ENCODE measurements at regions of chr2 and their contacts with region 1.

Region 1: GRCh38 chr2:64330281-64331113 is 123.5 kb upstream of the LGALSL start:
- DNase-seq: peak; percentile 54
- H3K4me3 Mint-ChIP-seq: no peak overlapping the region
- H3K27ac Mint-ChIP-seq: peak overlapping the region; percentile 64
- H3K4me1 Mint-ChIP-seq: peaks cover 49% of the 10 kb centered on the region
- H3K27me3 Mint-ChIP-seq: peaks cover 7% of the 10 kb centered on the region

Region 2: GRCh38 chr2:63977904-63978303 is 352.6 kb before region 1 on chr2:
- intact Hi-C with region 1: loop called (anchors 5 kb)
- DNase-seq: peak; percentile 38
- H3K4me3 Mint-ChIP-seq: peak overlapping the region; percentile 57
- H3K27ac Mint-ChIP-seq: peak overlapping the region; percentile 69
- H3K4me1 Mint-ChIP-seq: peaks cover 26% of the 10 kb centered on the region
- H3K27me3 Mint-ChIP-seq: no peaks in the 10 kb centered on the region

Region 3: DNA sequence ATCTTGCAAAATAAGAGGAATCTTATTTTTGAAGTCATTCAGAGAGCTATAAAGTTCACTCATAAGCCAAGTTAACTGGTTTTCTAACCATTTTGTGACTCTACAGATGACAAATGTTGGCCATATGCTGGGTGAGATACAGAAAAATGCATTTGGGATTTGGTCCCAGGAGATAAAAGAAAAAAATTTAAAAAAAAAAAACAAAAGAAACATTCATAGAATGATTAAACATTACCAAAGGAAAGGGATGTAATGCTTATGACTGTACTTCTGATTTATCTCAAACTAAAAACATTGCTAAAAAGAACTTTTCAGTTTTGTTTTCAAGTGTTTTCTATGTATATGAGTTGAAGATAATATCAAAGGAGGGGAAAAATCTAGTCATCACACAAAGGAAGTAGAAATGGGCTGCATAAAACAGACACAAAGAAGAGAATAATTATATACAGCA is 229.3 kb before region 1 on chr2:
- intact Hi-C with region 1: loop called (anchors 1 kb)
- DNase-seq: no peak
- H3K4me3 Mint-ChIP-seq: peak overlapping the region; percentile 27
- H3K27ac Mint-ChIP-seq: peak overlapping the region; percentile 89
- H3K4me1 Mint-ChIP-seq: peaks cover 44% of the 10 kb centered on the region
- H3K27me3 Mint-ChIP-seq: no peaks in the 10 kb centered on the region

Region 4: DNA sequence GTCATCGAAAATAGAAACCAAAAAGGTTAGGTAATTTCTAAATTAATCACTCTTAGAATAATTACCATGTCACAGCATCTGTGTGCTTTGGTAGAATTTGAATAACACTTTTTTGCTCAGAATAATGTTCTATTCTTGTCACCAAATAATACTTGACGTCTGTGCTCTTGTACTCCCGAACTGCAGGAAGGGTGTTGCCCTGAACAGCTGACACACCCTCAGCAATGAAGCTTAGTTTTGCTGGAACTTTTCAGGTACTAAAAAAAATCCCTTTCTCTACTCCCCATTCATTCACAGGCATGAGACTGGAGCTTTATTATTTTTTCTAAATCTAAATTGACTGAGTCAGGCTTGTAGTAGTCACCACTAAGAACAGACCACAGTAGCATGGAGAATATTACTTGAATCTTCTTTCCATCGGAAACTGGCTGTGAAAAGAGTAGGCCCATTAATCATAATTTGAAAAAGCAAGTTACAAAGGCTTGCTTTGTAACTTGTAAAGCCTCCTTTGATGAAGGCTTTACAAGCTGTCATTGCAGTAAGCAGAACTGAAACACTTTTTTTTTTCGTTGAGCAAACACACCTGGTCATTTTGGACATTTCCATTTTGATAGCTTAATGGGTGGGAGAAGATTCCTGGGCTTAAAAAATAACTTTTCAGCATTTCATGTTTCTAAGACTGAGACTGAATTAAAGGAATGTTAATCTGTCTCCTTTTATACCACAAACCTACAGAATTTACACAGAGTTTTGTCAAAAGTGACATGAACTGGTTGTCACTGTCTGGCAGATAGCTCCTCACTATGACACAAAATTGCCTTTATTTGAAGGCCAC is 116.0 kb before region 1 on chr2:
- intact Hi-C with region 1: loop called (anchors 1 kb)
- DNase-seq: no peak
- H3K4me3 Mint-ChIP-seq: peak overlapping the region; percentile 50
- H3K27ac Mint-ChIP-seq: peak overlapping the region; percentile 95
- H3K4me1 Mint-ChIP-seq: peaks cover 44% of the 10 kb centered on the region
- H3K27me3 Mint-ChIP-seq: no peaks in the 10 kb centered on the region

Region 5: DNA sequence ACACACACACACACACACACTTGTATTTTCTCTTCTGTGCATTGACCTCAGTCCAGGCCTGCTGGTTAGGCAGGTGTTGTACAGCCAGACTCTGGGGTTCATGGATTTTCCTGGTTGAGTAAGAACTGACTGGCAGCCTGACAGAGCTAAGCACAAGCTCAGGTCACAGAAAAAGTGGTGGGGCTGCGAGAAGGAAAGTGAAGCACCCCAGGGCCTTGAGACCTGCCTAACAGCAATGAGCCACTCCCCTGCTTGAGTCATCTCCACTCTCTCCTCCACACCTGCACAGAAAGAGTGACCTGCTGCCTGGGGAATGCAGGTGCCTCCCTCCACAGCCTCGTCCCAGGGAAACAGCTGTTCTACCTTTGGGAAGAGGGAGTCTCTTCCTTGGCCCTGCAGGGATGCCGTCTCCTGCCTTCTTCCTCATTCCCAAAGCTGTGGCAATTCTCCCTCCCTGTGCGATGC is 32.1 kb after region 1 on chr2:
- intact Hi-C with region 1: no loop called
- DNase-seq: no peak
- H3K4me3 Mint-ChIP-seq: no peak overlapping the region
- H3K27ac Mint-ChIP-seq: no peak overlapping the region
- H3K4me1 Mint-ChIP-seq: peaks cover 9% of the 10 kb centered on the region
- H3K27me3 Mint-ChIP-seq: peaks cover 20% of the 10 kb centered on the region

Region 6: GRCh38 chr2:64562148-64562784 is 231.8 kb after region 1 on chr2:
- intact Hi-C with region 1: loop called (anchors 1 kb)
- DNase-seq: no peak
- H3K4me3 Mint-ChIP-seq: no peak overlapping the region
- H3K27ac Mint-ChIP-seq: peak overlapping the region; percentile 28
- H3K4me1 Mint-ChIP-seq: peaks cover 38% of the 10 kb centered on the region
- H3K27me3 Mint-ChIP-seq: no peaks in the 10 kb centered on the region

Region 7: GRCh38 chr2:64767670-64768468 is 437.4 kb after region 1 on chr2:
- intact Hi-C with region 1: loop called (anchors 2 kb)
- DNase-seq: peak; percentile 76
- H3K4me3 Mint-ChIP-seq: peak overlapping the region; percentile 87
- H3K27ac Mint-ChIP-seq: peak overlapping the region; percentile 96
- H3K4me1 Mint-ChIP-seq: peaks cover 50% of the 10 kb centered on the region
- H3K27me3 Mint-ChIP-seq: peaks cover 6% of the 10 kb centered on the region

Region 8: GRCh38 chr2:65357095-65357958 is 1026.8 kb after region 1 on chr2:
- intact Hi-C with region 1: loop called (anchors 5 kb)
- DNase-seq: no peak
- H3K4me3 Mint-ChIP-seq: no peak overlapping the region
- H3K27ac Mint-ChIP-seq: no peak overlapping the region
- H3K4me1 Mint-ChIP-seq: peaks cover 59% of the 10 kb centered on the region
- H3K27me3 Mint-ChIP-seq: peaks cover 16% of the 10 kb centered on the region

Measured in activated T-helper 2 cell treated with anti-CD3 and anti-CD28 coated beads, Interferon-gamma antibody, Interleukin-2, Interleukin-4, amounts not matched to agents 10 μg/mL and 5 μg/mL and 100 μg/mL, durations not matched to agents 14 hours and 24 hours and 36 hours (primary cell).